Activated T-helper 2 cell treated with anti-CD3 and anti-CD28 coated beads, Interferon-gamma antibody, Interleukin-2, Interleukin-4, amounts not matched to agents 10 μg/mL and 5 μg/mL and 100 μg/mL, durations not matched to agents 14 hours and 24 hours and 36 hours (primary cell): ENCODE measurements at regions of chr1 and their contacts with region 1.

Region 1: DNA sequence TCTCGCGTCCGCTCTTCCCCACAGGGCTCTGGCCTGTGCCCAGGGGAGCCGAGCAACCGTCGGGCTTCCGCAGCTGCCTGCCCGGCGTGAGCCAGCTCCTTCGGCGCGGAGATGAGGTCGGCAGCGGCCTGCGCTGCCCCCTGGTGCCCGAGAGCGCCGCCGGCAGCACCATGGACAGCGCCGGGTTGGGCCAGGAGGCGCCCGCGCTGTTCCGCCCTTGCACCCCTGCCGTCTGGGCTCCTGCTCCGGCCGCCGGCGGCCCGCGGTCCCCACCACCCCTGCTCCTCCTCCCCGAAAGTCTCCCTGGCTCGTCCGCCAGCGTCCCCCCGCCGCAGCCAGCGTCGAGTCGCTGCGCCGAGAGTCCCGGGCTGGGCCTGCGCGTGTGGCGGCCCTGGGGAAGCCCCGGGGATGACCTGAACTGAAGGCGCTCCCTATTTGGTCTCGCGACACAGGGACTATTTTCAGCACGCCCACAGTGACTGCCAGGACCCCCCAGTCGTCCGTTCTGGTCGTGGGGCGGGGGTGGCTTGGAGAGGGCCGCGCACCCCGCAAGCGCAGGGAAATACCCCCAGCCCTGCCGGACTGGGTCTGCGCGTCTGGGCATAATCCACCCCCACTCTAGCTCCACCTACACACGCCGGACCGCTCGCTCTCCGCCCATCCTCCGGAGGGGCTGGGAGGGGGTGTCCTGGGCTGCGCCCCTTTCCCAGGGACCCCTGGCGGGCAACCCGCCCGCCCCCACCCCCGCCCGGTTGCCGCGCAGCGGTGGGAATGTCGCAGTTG is 1.3 kb downstream of the HES3 start:
- DNase-seq: peak; percentile 76
- H3K4me3 Mint-ChIP-seq: no peak overlapping the region
- H3K27ac Mint-ChIP-seq: no peak overlapping the region
- H3K4me1 Mint-ChIP-seq: peaks cover 7% of the 10 kb centered on the region
- H3K27me3 Mint-ChIP-seq: peaks cover 62% of the 10 kb centered on the region

Region 2: DNA sequence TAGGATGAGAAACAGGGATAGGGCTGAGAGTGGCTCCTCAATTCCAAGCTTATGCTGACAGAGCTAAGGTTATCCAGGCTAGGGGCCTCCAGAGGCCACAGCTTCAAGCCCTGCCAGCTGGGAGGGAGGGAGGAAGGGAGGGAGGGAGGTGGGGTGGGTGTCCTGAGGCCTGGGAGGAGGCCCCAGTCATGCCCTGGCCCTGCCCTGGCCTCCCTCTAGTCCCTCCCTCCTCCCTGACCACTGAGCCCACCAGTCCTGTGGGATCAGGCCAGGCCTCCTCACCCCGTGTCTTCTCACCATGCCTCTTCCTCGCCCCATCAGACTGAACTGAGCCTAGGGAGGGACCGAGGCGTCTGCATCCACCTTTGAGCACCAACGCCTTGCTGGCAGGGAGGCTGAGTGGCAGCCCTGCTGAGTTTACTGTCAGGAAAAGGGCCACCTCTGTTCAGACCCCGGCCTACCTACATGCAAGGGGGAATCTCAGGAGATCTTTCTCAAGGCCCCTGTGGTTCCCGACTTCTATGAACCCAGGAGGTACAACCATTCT is 369.1 kb before region 1 on chr1:
- intact Hi-C with region 1: no loop called
- DNase-seq: no peak
- H3K4me3 Mint-ChIP-seq: no peak overlapping the region
- H3K27ac Mint-ChIP-seq: no peak overlapping the region
- H3K4me1 Mint-ChIP-seq: no peaks in the 10 kb centered on the region
- H3K27me3 Mint-ChIP-seq: no peaks in the 10 kb centered on the region

Region 3: DNA sequence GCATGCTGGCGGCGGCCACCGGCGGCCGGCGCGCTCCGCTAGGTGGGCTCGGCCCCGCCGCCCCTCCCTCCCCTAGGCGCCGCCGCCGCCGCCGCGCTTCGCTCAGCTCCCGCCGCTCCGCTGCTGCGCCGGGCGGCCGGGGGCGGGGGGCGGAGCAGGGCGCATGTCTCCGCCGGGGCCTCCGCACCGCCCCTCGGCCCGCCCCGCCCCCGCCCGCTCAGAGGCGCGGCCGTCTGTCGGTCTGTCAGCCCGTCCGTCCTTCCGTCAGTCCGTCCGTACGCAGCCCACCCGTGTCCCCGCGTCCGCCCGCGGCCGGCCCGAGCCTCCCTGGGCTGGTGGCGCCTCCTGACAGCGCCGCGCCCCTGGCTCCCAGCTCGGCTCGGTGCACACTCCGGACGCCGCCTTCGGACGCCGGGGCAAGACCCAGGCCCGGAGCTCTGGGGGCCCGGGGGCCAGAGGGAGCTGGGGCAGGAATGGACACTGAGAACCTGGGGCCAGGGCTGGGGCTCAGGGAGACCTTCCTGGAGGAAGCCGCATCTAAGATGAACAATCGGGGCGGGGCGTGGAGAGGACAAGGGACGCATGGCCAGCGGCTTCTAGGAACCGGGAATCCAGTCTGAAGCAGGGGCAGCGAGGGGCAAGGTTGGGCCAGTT is 15.8 kb after region 1 on chr1 and contains the start of gene GPR153:
- intact Hi-C with region 1: no loop called
- DNase-seq: peak; percentile 35
- H3K4me3 Mint-ChIP-seq: peak within 1 kb of the TSS; percentile 54
- H3K27ac Mint-ChIP-seq: no peak within 1 kb of the TSS
- H3K4me1 Mint-ChIP-seq: peaks cover 2% of the 10 kb centered on the region
- H3K27me3 Mint-ChIP-seq: peaks cover 19% of the 10 kb centered on the region
- total RNA-seq, gene GPR153: 1.5 TPM in 2 replicates

Region 4: GRCh38 chr1:6343506-6344405 is 98.5 kb after region 1 on chr1:
- intact Hi-C with region 1: loop called (anchors 5 kb)
- DNase-seq: peak; percentile 60
- H3K4me3 Mint-ChIP-seq: no peak overlapping the region
- H3K27ac Mint-ChIP-seq: no peak overlapping the region
- H3K4me1 Mint-ChIP-seq: peaks cover 10% of the 10 kb centered on the region
- H3K27me3 Mint-ChIP-seq: no peaks in the 10 kb centered on the region

Region 5: DNA sequence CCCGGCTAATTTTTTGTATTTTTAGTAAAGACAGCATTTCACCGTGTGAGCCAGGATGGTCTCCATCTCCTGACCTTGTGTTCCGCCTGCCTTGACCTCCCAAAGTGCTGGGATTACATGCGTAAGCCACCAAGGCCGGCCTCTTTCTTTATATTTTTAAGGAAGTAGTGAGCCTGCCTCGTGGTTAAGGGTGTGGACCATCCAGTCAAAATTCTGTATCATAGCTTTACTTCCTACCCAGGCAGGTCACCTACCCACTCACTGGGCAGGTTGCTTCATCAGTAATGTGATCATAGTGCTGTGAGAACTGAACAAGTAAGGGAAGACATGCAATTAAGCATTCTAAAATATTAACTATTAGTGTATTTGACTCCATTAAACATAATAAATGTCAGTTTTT is 156.4 kb after region 1 on chr1:
- intact Hi-C with region 1: loop called (anchors 1 kb)
- DNase-seq: no peak
- H3K4me3 Mint-ChIP-seq: no peak overlapping the region
- H3K27ac Mint-ChIP-seq: no peak overlapping the region
- H3K4me1 Mint-ChIP-seq: no peaks in the 10 kb centered on the region
- H3K27me3 Mint-ChIP-seq: peaks cover 9% of the 10 kb centered on the region

Region 6: DNA sequence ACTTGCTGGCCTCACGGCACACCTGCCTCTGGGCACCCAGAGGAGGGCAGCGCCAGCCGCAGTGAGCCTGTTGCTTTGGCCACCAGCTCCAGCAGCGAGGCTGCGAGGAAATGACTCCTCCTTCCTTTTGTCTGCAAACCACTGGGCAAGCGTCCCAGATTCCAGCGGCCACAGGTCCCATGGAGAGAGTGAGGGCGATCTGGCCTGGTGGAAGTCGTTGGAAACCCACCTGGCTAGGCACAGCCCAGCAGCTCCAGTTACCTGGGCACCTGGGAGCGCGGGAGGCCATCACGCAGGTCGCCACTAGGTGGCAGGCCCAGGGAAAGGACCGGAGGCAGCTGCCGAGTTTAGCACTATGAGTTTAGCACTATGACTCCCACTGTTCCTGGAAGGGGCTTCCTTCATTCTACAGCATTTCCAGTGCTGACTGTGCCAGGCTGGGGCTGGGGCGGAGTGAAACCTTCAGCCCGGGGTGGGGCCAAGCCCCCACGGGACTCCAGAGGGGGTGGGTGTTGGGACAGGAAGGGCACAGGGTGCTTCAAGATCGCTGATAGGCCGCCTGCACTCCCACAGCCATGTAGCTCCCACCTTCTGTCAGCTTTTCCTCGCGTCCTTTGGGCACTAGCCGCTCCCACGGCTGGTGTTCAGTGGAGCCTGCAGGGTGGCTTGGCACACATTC is 178.2 kb after region 1 on chr1:
- intact Hi-C with region 1: loop called (anchors 5 kb)
- DNase-seq: peak; percentile 49
- H3K4me3 Mint-ChIP-seq: no peak overlapping the region
- H3K27ac Mint-ChIP-seq: no peak overlapping the region
- H3K4me1 Mint-ChIP-seq: peaks cover 3% of the 10 kb centered on the region
- H3K27me3 Mint-ChIP-seq: peaks cover 44% of the 10 kb centered on the region

Region 7: GRCh38 chr1:6438047-6438525 is 192.8 kb after region 1 on chr1:
- intact Hi-C with region 1: loop called (anchors 2 kb)
- DNase-seq: peak; percentile 65
- H3K4me3 Mint-ChIP-seq: no peak overlapping the region
- H3K27ac Mint-ChIP-seq: no peak overlapping the region
- H3K4me1 Mint-ChIP-seq: peaks cover 3% of the 10 kb centered on the region
- H3K27me3 Mint-ChIP-seq: peaks cover 27% of the 10 kb centered on the region